ENCODE measurements at regions of chr20 and their contacts with region 1.

Region 1: GRCh38 chr20:22371843-22372242 is 212.5 kb downstream of the FOXA2 start:
- DNase-seq: peak; percentile 74 to 96 (median 94)
- H3K4me3 ChIP-seq: peak overlapping the region in 2 of 7 experiments; percentile 6 to 37
- H3K27ac ChIP-seq: no peak overlapping the region
- H3K4me1 ChIP-seq: peaks cover 16 to 54% (median 49%) of the 10 kb centered on the region in 4 experiments
- H3K27me3 ChIP-seq: peaks cover 0 to 2% (median 0%) of the 10 kb centered on the region in 5 experiments

Region 2: DNA sequence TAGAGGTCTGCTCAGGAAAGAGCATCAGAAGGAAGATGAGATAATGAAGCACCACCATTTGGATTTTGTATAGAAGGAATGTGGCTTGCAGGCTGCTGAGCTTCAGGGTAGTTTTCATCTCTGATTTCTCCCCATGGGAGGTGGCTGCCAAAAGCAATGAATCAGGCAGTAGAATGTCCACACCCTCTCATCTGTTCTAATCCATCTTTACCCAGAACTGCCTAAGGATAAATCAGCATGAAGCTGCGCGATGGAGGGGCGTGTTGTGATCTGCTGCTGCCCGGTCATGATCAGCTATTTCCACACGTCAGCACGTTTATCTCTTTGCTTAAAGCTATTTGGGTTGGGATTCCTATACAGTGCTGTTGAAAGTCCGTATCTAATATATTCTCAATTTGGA is 82.9 kb before region 1 on chr20:
- CTCF ChIA-PET with region 1: no interaction called
- POLR2A ChIA-PET with region 1: no interaction called
- DNase-seq: no peak
- H3K4me3 ChIP-seq: no peak overlapping the region
- H3K27ac ChIP-seq: no peak overlapping the region
- H3K4me1 ChIP-seq: no peaks in the 10 kb centered on the region
- H3K27me3 ChIP-seq: peaks cover 0 to 9% (median 0%) of the 10 kb centered on the region in 5 experiments

Region 3: GRCh38 chr20:22339091-22339881 is 32.6 kb before region 1 on chr20:
- CTCF ChIA-PET with region 1: interaction called, 10 read pairs
- POLR2A ChIA-PET with region 1: no interaction called
- DNase-seq: peak; percentile 77 to 85 (median 79)
- H3K4me3 ChIP-seq: peak overlapping the region in 2 of 7 experiments; percentile 17 to 25
- H3K27ac ChIP-seq: no peak overlapping the region
- H3K4me1 ChIP-seq: peaks cover 0 to 10% (median 8%) of the 10 kb centered on the region in 4 experiments
- H3K27me3 ChIP-seq: peaks cover 0 to 2% (median 0%) of the 10 kb centered on the region in 5 experiments